Calu3 (cell line): ENCODE measurements at regions of chr14 and their contacts with region 1.

Region 1: GRCh38 chr14:21978184-21978998 is 304.8 kb upstream of the OR4E1 start:
- DNase-seq: peak; percentile 59
- H3K4me3 Mint-ChIP-seq: no peak overlapping the region
- H3K27ac Mint-ChIP-seq: no peak overlapping the region
- H3K4me1 Mint-ChIP-seq: no peaks in the 10 kb centered on the region
- H3K27me3 Mint-ChIP-seq: peaks cover 68% of the 10 kb centered on the region
- CTCF ChIP-seq: peak; percentile 66

Region 2: GRCh38 chr14:21940887-21941856 is 37.2 kb before region 1 on chr14:
- CTCF ChIA-PET with region 1: no interaction called
- intact Hi-C with region 1: loop called (anchors 5 kb)
- DNase-seq: peak; percentile 43
- H3K4me3 Mint-ChIP-seq: no peak overlapping the region
- H3K27ac Mint-ChIP-seq: no peak overlapping the region
- H3K4me1 Mint-ChIP-seq: peaks cover 8% of the 10 kb centered on the region
- H3K27me3 Mint-ChIP-seq: peaks cover 34% of the 10 kb centered on the region
- CTCF ChIP-seq: peak; percentile 49

Region 3: GRCh38 chr14:21997300-21997699 is 18.9 kb after region 1 on chr14:
- CTCF ChIA-PET with region 1: interaction called, 13 read pairs
- intact Hi-C with region 1: no loop called
- DNase-seq: peak; percentile 24
- H3K4me3 Mint-ChIP-seq: no peak overlapping the region
- H3K27ac Mint-ChIP-seq: no peak overlapping the region
- H3K4me1 Mint-ChIP-seq: peaks cover 5% of the 10 kb centered on the region
- H3K27me3 Mint-ChIP-seq: peaks cover 57% of the 10 kb centered on the region
- CTCF ChIP-seq: no peak

Region 4: DNA sequence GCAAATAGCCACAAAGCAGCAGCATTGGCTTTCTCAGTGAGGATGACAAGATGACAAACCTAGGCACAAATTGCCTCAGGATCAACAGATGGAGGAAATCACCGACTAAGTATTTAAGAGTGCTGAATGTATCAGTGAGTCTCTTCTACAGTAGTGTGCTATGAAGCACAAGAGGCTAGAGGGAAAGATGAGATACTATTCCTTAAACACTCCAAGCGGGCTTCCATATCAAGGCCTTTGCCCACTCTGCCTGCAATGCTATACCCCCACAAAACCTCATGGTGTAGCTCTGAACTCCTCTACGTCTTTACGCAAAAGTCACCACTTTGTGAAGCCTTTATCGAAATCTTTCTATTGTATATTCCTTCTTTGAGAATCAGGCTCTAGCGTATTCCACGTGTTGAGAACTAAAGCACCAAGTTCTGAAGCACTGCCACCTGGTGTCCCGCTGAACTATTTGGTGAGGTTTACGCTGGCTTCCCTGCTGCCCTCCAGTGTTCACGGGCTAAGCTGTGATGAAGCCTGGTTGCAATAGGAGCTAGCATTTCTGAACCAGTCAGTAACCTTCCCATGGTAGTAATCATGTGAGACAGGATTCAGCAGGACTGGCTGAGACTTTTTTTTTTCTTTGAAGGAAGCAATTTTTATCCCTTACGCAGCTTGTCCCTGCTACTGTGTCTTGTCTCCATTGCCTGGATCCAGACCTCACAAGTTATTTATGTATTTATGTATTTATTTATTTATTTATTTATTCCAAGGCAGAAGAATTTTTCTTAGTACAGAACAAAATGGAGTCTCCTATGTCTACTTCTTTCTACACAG is 121.8 kb after region 1 on chr14:
- CTCF ChIA-PET with region 1: interaction called, 6 read pairs
- intact Hi-C with region 1: loop called (anchors 5 kb)
- DNase-seq: peak; percentile 75
- H3K4me3 Mint-ChIP-seq: no peak overlapping the region
- H3K27ac Mint-ChIP-seq: no peak overlapping the region
- H3K4me1 Mint-ChIP-seq: peaks cover 9% of the 10 kb centered on the region
- H3K27me3 Mint-ChIP-seq: peaks cover 6% of the 10 kb centered on the region
- CTCF ChIP-seq: peak; percentile 55